K562 (cell line): ENCODE measurements at regions of chr1 and their contacts with region 1.

Region 1: GRCh38 chr1:23150125-23150524 is 18.5 kb downstream of the LUZP1 start:
- DNase-seq: no peak
- ATAC-seq: no peak; the same call in 2 of the 3 replicates
- H3K4me3 ChIP-seq: no peak overlapping the region
- H3K27ac ChIP-seq: no peak overlapping the region
- H3K4me1 ChIP-seq: peaks cover 4 to 8% of the 10 kb centered on the region in 2 experiments; a peak in 2 of 5 replicates
- H3K27me3 ChIP-seq: no peaks in the 10 kb centered on the region
- CTCF ChIP-seq: no peak
- EP300 ChIP-seq: no peak
- POLR2A ChIP-seq: no peak
- RAD21 ChIP-seq: no peak

Region 2: GRCh38 chr1:23163395-23163794 is 13.3 kb after region 1 on chr1:
- CTCF ChIA-PET with region 1: interaction called, 4 read pairs
- POLR2A ChIA-PET with region 1: interaction called, 15 read pairs
- in situ Hi-C with region 1: no loop called
- intact Hi-C with region 1: no loop called
- DNase-seq: no peak
- ATAC-seq: no peak
- H3K4me3 ChIP-seq: no peak overlapping the region
- H3K27ac ChIP-seq: no peak overlapping the region
- H3K4me1 ChIP-seq: peaks cover 11 to 14% of the 10 kb centered on the region in 2 experiments; a peak in 4 of 5 replicates
- H3K27me3 ChIP-seq: no peaks in the 10 kb centered on the region
- CTCF ChIP-seq: no peak
- EP300 ChIP-seq: no peak
- POLR2A ChIP-seq: no peak
- RAD21 ChIP-seq: no peak